Endothelial cell of umbilical vein (primary cell): ENCODE measurements at regions of chr4 and their contacts with region 1.

Region 1: DNA sequence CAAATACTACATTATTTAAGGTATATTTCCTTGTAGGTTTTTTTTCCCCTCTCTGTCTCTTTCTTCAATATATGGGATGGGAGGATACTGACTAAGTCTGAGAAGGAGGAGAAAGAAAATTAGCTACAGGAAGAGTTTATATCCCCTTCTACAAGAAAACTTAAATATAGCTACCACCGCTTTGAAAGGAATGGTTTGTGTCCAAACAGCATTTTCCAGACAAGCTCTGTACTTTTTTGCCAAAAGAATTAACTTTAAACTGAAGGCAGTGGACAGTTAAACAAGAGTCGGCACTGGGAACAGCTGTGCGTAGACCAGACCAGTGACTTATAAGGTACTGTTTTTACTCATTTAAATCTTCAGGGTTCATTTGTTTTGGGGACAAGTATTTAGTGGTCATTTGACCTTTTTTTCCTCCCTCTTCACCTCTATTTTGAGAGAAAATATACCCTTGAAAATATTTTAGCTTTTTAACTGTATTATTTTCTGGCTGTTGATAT is 303.7 kb downstream of the ARHGAP24 start:
- DNase-seq: peak; percentile 83
- H3K4me3 ChIP-seq: peak overlapping the region; percentile 58 to 98 (median 98)
- H3K27ac ChIP-seq: peak overlapping the region; percentile 100
- H3K4me1 ChIP-seq: peaks cover 73% of the 10 kb centered on the region
- H3K27me3 ChIP-seq: no peaks in the 10 kb centered on the region
- CTCF ChIP-seq: no peak
- POLR2A ChIP-seq: no peak

Region 2: DNA sequence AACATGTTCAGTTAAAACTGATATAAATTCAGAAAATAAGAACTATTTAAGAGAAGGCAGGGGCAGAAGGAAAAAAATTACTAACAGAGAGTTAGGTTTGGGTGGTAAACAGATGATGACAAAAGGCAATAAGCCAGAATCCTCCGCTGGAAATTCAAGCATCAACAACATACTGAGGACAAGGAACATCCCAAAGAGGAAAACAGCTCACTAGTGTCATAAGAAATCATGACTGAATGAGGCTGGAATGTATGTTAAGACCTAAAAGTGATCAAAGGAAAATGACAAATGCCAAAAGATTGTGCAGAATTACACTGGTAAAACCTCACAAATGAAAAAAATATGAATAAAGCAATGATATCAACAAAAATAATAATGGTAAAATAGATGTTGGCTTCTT is 900.6 kb before region 1 on chr4:
- CTCF ChIA-PET with region 1: no interaction called
- POLR2A ChIA-PET with region 1: no interaction called
- dilution Hi-C with region 1: no loop called
- intact Hi-C with region 1: loop called (anchors 5 kb)
- DNase-seq: peak; percentile 70
- H3K4me3 ChIP-seq: no peak overlapping the region
- H3K27ac ChIP-seq: peak overlapping the region; percentile 88
- H3K4me1 ChIP-seq: peaks cover 35% of the 10 kb centered on the region
- H3K27me3 ChIP-seq: no peaks in the 10 kb centered on the region
- CTCF ChIP-seq: no peak
- POLR2A ChIP-seq: no peak

Region 3: GRCh38 chr4:85761803-85762528 is 16.7 kb before region 1 on chr4:
- CTCF ChIA-PET with region 1: interaction called, 73 read pairs
- POLR2A ChIA-PET with region 1: interaction called, 43 read pairs
- dilution Hi-C with region 1: no loop called
- intact Hi-C with region 1: loop called (anchors 1 kb)
- DNase-seq: peak; percentile 99
- H3K4me3 ChIP-seq: peak overlapping the region in 2 of 3 experiments; percentile 21 to 60
- H3K27ac ChIP-seq: peak overlapping the region; percentile 90
- H3K4me1 ChIP-seq: peaks cover 53% of the 10 kb centered on the region
- H3K27me3 ChIP-seq: no peaks in the 10 kb centered on the region
- CTCF ChIP-seq: no peak
- POLR2A ChIP-seq: no peak

Region 4: GRCh38 chr4:85842540-85842939 is 63.9 kb after region 1 on chr4:
- CTCF ChIA-PET with region 1: interaction called, 4 read pairs
- POLR2A ChIA-PET with region 1: no interaction called
- dilution Hi-C with region 1: no loop called
- intact Hi-C with region 1: loop called (anchors 1 kb)
- DNase-seq: peak; percentile 96
- H3K4me3 ChIP-seq: peak overlapping the region in 1 of 3 experiments; percentile 29
- H3K27ac ChIP-seq: peak overlapping the region; percentile 95
- H3K4me1 ChIP-seq: peaks cover 24% of the 10 kb centered on the region
- H3K27me3 ChIP-seq: no peaks in the 10 kb centered on the region
- CTCF ChIP-seq: no peak
- POLR2A ChIP-seq: no peak

Region 5: GRCh38 chr4:86032476-86033022 is 253.9 kb after region 1 on chr4:
- CTCF ChIA-PET with region 1: no interaction called
- POLR2A ChIA-PET with region 1: no interaction called
- dilution Hi-C with region 1: no loop called
- intact Hi-C with region 1: loop called (anchors 1 kb)
- DNase-seq: no peak
- H3K4me3 ChIP-seq: no peak overlapping the region
- H3K27ac ChIP-seq: peak overlapping the region; percentile 50
- H3K4me1 ChIP-seq: peaks cover 40% of the 10 kb centered on the region
- H3K27me3 ChIP-seq: no peaks in the 10 kb centered on the region
- CTCF ChIP-seq: no peak
- POLR2A ChIP-seq: no peak

Region 6: GRCh38 chr4:86108137-86108536 is 329.5 kb after region 1 on chr4:
- CTCF ChIA-PET with region 1: no interaction called
- POLR2A ChIA-PET with region 1: no interaction called
- dilution Hi-C with region 1: no loop called
- intact Hi-C with region 1: no loop called
- DNase-seq: no peak
- H3K4me3 ChIP-seq: no peak overlapping the region
- H3K27ac ChIP-seq: no peak overlapping the region
- H3K4me1 ChIP-seq: no peaks in the 10 kb centered on the region
- H3K27me3 ChIP-seq: peaks cover 0 to 9% of the 10 kb centered on the region in 2 experiments
- CTCF ChIP-seq: no peak
- POLR2A ChIP-seq: no peak